ENCODE measurements at regions of chr4 and their contacts with region 1.

Region 1: GRCh38 chr4:34261799-34262314 is 1982.5 kb downstream of the ARAP2 start:
- DNase-seq: no peak
- ATAC-seq: no peak
- H3K4me3 ChIP-seq: no peak overlapping the region
- H3K27ac ChIP-seq: no peak overlapping the region
- H3K4me1 ChIP-seq: no peaks in the 10 kb centered on the region
- H3K27me3 ChIP-seq: no peaks in the 10 kb centered on the region
- CTCF ChIP-seq: no peak

Region 2: DNA sequence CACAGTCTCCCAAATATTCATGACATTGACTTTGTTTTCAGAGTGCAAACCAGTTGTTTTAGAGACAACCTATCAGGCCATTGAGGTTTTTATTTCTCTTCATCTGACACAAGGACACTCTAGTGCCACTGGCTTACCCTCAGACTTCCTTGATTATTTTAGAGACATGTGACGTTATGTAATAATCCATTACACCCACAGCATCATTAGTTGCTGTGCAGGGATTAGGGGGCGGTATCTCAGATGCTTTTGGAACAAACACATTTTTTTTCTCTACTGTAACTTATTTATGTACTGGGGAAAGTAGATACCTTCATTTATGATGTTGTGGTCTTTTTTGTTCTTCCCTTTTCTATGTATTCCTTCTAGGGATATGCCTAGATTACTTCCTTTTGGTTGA is 1248.6 kb before region 1 on chr4:
- intact Hi-C with region 1: loop called in 1 of 10 experiments (anchors 10 kb)
- DNase-seq: no peak
- ATAC-seq: no peak
- H3K4me3 ChIP-seq: no peak overlapping the region
- H3K27ac ChIP-seq: no peak overlapping the region
- H3K4me1 ChIP-seq: no peaks in the 10 kb centered on the region
- H3K27me3 ChIP-seq: no peaks in the 10 kb centered on the region
- CTCF ChIP-seq: no peak

Region 3: DNA sequence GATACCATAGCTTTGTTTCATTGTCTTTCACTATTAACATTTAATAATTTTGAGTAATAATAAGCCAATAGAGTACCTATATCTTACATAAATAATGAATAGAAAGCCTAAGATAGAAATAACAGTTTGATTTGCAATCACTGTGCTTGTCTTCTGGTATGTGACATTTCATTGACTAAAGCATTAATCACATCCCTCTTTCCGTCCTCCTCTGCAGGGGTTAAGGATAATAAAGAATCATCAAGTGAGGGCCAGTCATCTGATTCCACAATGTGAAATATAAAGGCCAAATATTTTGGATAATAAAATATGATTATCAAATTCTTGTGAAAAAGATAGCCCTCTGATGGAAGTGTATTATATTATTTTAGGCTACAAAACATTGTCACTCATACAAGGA is 90.9 kb before region 1 on chr4:
- intact Hi-C with region 1: no loop called
- DNase-seq: no peak
- ATAC-seq: no peak
- H3K4me3 ChIP-seq: no peak overlapping the region
- H3K27ac ChIP-seq: no peak overlapping the region
- H3K4me1 ChIP-seq: no peaks in the 10 kb centered on the region
- H3K27me3 ChIP-seq: no peaks in the 10 kb centered on the region
- CTCF ChIP-seq: no peak

Measured in heart right ventricle (tissue), 16 donors.